Activated CD8-positive, alpha-beta T cell treated with anti-CD3 and anti-CD28 coated beads, Interleukin-2, amount 10 ng/mL, durations not matched to agents 7 days and 5 days (primary cell): ENCODE measurements at regions of chr11 and their contacts with region 1.

Region 1: DNA sequence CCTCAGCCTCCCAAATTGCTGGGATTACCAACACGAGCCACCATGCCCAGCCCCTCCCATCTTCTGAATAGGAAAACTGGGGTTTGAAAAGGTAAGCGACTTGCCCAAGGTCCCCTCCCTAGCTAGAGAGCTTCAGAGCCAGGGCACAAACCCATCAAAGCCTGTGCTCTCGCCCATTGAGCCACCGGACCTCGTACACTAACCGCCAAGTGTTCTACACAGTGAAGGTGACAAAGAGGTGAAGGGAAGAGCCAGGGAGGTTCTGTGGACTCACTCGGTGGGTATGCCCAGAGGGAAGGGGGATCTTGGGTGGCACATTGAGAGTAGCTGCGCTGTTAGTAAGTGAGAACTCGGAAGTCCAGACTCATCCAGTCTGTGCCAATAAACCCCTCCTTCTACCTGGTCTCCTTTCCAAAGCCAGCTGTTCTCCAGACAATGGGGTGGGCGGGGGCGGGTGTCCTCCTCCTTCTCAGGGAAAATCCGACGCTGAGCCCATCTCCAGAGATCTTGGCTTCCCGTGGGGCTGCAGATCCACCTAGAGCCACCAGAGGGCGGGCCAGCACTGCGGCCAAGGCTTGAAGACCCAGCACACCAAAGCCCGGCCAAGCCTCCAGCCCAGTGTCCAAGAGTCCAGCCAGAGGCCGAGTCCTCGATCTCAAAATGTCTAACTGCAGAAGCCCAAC is 3.2 kb upstream of the RTN4RL2 start:
- DNase-seq: peak; percentile 80
- ATAC-seq: peak; percentile 59
- H3K4me3 Mint-ChIP-seq: peak overlapping the region; percentile 22
- H3K27ac Mint-ChIP-seq: no peak overlapping the region
- H3K4me1 Mint-ChIP-seq: peaks cover 30% of the 10 kb centered on the region
- H3K27me3 Mint-ChIP-seq: peaks cover 31% of the 10 kb centered on the region

Region 2: DNA sequence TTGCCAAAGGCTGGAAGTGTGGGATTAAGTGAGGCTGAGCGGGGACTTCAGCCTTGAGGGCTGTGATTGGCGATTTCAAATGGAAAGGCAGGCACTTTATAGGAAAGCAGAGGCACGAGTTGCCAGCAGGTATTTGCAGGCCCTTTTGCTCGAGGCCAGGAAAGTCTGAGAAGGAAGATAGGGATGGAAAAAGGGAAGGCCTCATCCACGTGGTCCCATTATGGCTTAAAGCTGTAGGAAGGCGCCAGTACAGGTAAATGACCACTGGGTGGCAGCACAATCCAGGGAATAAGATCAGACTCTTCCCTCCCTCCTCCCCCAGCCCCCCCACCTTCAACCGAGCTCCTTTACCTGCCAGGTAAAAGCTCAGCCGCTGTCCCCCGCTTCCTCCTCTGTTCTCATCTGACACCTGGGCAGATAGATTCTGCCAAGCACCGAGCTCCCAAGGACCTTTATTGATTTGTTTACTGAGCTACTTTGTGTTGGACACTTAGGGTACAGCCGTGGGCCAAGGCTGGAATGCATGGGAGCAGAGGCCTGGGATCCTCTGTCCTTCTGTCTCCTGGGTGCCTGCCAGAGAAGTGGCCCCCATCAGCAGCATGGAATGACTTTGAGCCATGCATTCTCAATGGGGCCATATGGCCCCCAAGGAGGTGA is 111.4 kb before region 1 on chr11:
- CTCF ChIA-PET with region 1: interaction called, 18 read pairs
- POLR2A ChIA-PET with region 1: no interaction called
- DNase-seq: peak; percentile 76
- ATAC-seq: peak; percentile 62
- H3K4me3 Mint-ChIP-seq: no peak overlapping the region
- H3K27ac Mint-ChIP-seq: no peak overlapping the region
- H3K4me1 Mint-ChIP-seq: peaks cover 3% of the 10 kb centered on the region
- H3K27me3 Mint-ChIP-seq: peaks cover under 1% of the 10 kb centered on the region

Region 3: DNA sequence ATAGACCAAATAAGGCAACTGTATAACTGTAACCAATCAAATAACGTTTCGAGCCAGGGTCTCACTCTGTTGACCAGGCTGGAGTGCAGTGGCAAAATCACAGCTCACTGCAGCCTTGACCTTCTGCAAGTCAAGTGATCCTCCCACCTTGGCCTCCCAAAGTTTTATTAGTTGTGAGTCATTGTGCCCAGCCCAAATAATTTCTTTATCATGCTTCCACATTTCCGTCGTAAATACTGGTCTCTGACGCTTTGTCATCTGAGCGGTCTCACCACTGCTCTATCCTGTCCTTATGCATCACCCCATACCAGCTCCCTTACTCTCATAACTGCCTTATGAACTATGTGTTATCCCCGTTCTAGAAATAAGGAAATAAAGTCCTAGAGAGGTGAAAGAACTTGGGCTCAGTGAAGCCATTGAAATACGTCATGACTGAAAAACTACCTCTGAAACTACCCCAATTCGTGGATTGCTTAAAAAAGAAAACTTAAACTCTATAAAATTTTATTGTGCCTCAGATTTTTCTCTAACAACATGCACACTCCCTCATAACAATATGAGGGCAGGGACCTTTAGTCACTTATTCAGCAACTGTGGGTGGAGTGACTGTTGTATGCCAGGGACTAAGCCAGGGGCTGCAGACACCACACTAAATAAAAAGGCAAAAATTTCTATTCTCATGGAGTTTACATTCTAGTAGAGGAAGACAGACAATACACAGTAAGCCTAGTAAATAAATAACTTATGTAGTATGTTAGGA is 12.6 kb before region 1 on chr11:
- CTCF ChIA-PET with region 1: interaction called, 24 read pairs
- POLR2A ChIA-PET with region 1: no interaction called
- DNase-seq: no peak
- ATAC-seq: no peak
- H3K4me3 Mint-ChIP-seq: no peak overlapping the region
- H3K27ac Mint-ChIP-seq: no peak overlapping the region
- H3K4me1 Mint-ChIP-seq: no peaks in the 10 kb centered on the region
- H3K27me3 Mint-ChIP-seq: peaks cover 9% of the 10 kb centered on the region

Region 4: DNA sequence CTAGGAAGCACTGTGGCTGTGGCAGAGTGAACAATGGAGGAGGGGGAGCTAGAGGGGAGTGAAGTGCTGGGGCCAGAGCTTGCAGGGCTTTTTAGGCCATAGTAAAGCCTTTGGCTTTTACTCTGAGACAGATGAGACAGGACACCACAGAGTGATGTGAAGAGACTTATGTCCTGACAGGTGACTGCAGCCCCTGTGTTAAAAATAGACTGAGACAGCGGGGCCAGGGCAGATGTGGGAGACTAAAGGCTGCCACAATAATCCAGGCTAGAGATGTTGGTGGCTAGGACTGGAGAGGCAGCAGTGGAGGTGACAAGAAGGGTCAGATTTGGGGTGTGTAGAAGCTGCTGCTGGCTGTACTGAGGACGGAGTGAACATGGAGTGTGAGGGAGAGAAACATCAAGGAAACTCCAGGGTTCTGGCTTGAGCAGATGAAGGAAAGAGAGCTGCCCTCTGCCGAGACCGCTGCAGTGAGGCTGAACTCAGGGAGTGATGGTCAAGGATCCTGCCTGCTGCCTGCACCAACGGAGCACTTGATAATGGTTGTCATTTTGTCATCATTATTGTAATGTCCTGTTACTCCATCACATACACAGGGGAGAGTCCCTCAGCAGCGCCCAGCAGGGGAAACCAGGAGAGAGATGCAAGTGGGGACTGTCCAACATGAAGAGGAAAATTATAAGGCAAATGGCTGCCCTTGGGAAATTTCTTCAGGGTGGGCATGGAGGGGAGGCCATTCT is 31.0 kb after region 1 on chr11:
- CTCF ChIA-PET with region 1: interaction called, 239 read pairs
- POLR2A ChIA-PET with region 1: no interaction called
- DNase-seq: no peak
- ATAC-seq: no peak
- H3K4me3 Mint-ChIP-seq: no peak overlapping the region
- H3K27ac Mint-ChIP-seq: peak overlapping the region; percentile 41
- H3K4me1 Mint-ChIP-seq: peaks cover 4% of the 10 kb centered on the region
- H3K27me3 Mint-ChIP-seq: peaks cover 3% of the 10 kb centered on the region

Region 5: GRCh38 chr11:57515332-57516060 is 58.4 kb after region 1 on chr11 and contains the start of gene SLC43A1:
- CTCF ChIA-PET with region 1: interaction called, 46 read pairs
- POLR2A ChIA-PET with region 1: no interaction called
- DNase-seq: peak; percentile 45
- ATAC-seq: peak; percentile 47
- H3K4me3 Mint-ChIP-seq: peak within 1 kb of the TSS; percentile 97
- H3K27ac Mint-ChIP-seq: peak within 1 kb of the TSS; percentile 91
- H3K4me1 Mint-ChIP-seq: peaks cover 32% of the 10 kb centered on the region
- H3K27me3 Mint-ChIP-seq: no peaks in the 10 kb centered on the region
- total RNA-seq, gene SLC43A1: 26.4 to 28.4 TPM

Region 6: DNA sequence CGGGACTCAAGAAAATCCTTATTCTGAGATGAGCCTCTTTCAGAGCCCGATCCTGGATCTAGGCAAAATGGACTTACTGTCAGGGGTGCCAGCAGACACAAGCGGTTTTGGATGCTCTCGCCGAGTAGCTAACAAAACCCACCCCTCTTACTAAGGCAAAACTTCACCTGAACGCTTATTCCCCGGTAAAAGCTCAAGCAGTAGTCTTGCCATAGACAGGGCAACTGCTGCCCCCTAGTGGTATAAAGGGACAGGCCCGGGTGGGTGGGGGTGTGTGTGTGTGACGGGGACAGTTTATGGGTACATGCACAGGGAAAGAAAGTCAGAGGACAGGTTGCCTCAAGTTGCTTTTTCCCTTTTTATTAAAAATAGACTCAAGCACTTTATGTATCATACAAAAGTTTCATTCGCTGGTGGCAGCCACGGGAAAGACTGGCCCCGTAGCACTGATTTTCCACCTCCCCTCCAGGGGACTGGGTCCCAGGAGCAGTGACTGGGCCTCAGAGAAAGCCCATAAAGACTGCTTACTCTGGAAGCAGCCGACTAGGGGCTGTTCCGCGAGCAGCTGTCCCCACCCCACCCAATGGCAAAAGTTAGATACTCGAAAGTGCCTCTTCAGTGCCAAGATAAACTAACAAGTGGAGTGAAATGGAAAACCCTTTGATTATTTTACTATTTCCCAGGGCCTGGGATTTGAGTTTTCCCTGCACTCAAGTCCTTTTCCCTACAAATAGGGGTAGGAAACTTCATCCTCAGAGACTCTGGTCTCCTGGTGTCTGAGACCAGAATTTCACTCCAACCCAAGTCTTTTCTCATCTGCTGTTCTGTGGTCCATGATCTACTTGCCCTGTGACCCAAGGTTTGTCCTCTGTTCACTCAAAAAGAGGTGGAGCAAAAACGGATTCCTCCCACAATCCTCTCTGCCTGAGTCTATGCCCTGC is 187.9 kb after region 1 on chr11:
- CTCF ChIA-PET with region 1: interaction called, 50 read pairs
- POLR2A ChIA-PET with region 1: no interaction called
- DNase-seq: peak; percentile 91
- ATAC-seq: peak; percentile 86
- H3K4me3 Mint-ChIP-seq: no peak overlapping the region
- H3K27ac Mint-ChIP-seq: no peak overlapping the region
- H3K4me1 Mint-ChIP-seq: peaks cover 51% of the 10 kb centered on the region
- H3K27me3 Mint-ChIP-seq: peaks cover 53% of the 10 kb centered on the region